GM10248 (cell line): ENCODE measurements at regions of chr2 and their contacts with region 1.

Region 1: DNA sequence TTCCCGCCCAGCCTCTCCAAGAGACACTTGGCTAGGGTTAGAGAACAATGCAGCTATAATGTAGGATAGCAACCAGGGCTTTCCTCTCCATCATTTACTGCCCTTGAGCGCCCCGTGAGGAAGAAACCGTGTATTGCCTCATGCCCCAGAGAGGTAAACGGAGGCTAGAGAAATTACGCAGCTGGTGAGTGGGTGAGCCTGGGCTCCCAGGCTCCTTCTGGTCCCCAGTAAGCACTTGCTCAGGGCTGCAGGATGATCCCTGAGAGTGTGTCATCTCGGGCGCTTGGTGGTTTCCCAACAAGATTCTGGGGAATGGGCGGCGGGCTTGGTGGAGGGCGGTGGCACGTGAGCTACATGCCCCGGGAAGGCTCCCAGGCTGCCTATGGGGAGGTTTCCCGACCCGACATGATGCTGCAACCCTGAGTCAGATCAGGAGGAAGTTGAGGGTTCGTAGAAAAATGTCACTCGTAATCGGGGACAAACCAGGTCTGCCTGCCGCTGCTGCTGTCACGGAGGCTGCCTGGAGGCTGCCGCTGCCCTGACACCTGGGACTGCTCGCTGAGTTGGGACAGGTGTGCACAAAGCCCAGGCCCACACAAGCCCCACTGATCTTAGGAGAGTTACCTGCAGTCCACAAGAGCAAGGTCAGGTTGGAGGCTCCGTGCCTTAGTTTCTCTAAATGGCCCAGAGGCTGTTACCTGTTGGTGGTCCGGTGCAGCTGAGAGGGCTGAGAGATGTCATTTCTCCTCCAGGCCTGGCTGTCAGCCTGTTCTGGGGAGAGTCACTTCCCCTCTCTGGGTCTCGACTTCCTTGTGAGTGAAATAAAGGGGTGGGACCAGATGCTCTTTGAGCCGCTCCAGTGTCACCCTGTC is at the start of gene GPR55:
- DNase-seq: peak; percentile 79
- CTCF ChIP-seq: peak; percentile 70

Region 2: GRCh38 chr2:230751062-230751461 is 173.6 kb before region 1 on chr2:
- CTCF ChIA-PET with region 1: no interaction called
- POLR2A ChIA-PET with region 1: no interaction called
- DNase-seq: no peak
- CTCF ChIP-seq: no peak

Region 3: GRCh38 chr2:230902180-230902899 is 22.4 kb before region 1 on chr2:
- CTCF ChIA-PET with region 1: interaction called, 108 read pairs
- POLR2A ChIA-PET with region 1: interaction called, 3 read pairs
- DNase-seq: peak; percentile 77
- CTCF ChIP-seq: peak; percentile 97

Region 4: DNA sequence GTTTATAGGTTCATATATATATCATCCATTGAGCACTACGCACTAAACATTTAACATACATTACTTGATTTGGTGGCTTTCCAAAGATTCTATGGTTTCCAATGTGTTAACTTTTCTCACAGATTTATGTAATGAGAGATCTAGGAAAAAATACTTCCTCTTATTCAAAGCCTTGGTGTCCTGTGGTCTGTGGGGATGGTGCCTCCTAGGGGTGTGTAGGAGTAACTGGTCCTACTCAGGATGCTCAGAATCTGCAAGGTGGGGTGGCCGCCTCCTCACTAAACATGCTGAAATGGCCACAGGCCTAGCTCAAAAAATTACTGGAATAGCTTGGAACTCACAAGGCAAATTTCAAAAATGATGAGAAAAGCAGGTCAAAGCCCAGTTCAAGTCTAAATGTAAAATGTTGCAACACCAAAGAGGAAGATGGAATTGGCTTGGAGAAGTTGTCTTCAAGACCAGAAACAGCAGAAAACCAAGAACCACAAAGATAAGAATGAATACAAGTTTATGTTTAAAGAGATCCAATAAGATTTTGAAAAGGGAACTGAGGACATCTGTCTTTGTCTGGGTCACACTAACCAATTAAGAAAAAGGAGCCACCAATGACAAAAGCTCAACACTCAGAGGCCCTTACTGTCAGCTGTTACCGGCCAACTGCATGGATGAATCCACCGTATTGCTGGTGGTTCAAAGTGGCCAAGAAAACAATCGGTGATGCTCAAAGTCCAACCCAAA is 11.1 kb before region 1 on chr2:
- CTCF ChIA-PET with region 1: interaction called, 108 read pairs
- POLR2A ChIA-PET with region 1: no interaction called
- DNase-seq: no peak
- CTCF ChIP-seq: peak; percentile 33

Region 5: DNA sequence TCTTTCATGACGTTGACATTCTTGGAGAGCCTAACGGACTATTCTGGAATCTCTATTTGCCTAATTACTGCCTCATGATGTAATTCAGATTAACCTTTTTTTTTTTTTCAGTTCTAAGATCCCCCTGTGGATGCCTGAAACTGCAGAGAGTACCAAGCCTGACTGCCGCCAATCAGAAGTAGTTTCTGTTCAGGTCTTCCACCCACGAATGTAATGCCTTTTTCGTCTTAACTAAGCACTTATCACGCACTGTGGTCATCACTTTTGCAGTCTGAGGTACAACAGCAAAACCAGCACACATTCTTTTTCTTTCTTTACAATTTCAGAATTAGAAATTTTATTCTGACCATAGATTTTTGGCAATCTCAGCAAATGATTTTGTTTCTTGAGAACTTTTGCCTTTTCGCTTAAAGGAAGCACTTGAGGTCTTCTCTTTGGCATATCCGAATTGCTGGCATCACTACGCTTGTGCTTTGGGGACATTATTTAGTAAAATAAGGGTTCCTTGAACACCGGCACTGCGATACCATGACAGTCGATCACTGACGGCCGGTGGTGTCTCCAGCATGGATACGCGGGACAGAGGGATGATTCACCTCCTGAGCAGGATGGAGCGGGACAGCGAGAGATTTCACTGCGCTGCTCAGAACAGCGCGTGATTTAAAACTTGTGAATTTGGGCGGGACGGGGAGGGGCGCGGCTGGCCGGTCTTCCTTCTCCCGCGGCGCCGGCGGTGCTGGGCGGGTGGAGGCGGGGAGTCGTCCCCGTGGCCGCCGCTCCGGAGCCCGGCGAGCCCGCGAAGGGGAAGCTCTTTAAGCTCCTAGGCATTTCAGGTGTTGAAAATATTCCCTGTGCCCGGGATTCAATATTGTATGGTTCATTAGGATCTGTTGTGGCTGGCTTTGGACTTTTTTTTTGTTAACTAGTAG is 32.4 kb after region 1 on chr2:
- CTCF ChIA-PET with region 1: interaction called, 305 read pairs
- POLR2A ChIA-PET with region 1: interaction called, 3 read pairs
- DNase-seq: peak; percentile 68
- CTCF ChIP-seq: no peak

Region 6: DNA sequence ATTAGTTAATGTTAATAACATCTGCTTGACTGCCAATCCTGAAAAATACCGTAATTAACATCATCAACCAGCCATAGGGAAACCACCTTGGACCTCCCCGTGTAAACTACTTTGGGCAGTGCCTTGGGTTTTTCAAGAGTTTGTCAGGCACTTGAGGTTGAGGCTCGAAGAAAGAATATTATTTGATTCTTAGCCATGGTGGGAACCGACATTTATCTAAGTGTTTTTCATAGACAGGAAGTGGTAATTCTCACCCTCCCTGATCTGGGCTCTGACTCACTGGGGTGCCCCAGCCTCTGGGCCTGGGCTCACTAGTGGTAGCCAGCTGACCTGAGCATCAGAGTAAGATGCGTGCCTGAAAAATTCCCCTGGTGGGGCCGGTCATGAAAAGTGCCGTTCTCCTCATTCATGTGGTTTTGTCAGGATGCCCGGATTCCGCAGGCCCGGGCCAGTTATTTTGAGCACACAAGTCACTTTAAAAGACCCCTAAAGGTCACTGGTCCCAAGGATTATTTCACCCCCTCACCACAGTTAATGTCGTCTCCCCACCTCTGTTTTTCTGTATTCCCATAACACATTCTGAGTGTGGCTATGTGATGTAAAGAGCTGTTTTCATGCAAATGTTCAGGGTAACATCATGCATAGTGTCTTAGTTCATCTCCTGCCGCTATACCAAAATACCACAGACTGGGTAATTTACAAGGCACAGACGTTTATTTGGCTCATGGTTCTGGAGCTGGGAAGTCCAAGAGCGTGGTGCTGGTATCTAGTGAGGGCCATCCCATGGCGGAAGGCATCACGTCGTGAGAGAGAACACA is 49.6 kb after region 1 on chr2:
- CTCF ChIA-PET with region 1: interaction called, 18 read pairs
- POLR2A ChIA-PET with region 1: no interaction called
- DNase-seq: peak; percentile 84
- CTCF ChIP-seq: no peak